Right ventricle myocardium inferior (tissue), 1 donor: ENCODE measurements at regions of chr1 and their contacts with region 1.

Region 1: GRCh38 chr1:234533975-234534876 is 55.2 kb upstream of the TARBP1 start:
- DNase-seq: peak; percentile 93
- ATAC-seq: peak; percentile 15

Region 2: GRCh38 chr1:234509452-234510328 is 24.5 kb before region 1 on chr1:
- intact Hi-C with region 1: no loop called
- DNase-seq: no peak
- ATAC-seq: no peak

Region 3: GRCh38 chr1:234599617-234600417 is 65.6 kb after region 1 on chr1:
- intact Hi-C with region 1: loop called (anchors 1 kb)
- DNase-seq: peak; percentile 92
- ATAC-seq: peak; percentile 94

Region 4: DNA sequence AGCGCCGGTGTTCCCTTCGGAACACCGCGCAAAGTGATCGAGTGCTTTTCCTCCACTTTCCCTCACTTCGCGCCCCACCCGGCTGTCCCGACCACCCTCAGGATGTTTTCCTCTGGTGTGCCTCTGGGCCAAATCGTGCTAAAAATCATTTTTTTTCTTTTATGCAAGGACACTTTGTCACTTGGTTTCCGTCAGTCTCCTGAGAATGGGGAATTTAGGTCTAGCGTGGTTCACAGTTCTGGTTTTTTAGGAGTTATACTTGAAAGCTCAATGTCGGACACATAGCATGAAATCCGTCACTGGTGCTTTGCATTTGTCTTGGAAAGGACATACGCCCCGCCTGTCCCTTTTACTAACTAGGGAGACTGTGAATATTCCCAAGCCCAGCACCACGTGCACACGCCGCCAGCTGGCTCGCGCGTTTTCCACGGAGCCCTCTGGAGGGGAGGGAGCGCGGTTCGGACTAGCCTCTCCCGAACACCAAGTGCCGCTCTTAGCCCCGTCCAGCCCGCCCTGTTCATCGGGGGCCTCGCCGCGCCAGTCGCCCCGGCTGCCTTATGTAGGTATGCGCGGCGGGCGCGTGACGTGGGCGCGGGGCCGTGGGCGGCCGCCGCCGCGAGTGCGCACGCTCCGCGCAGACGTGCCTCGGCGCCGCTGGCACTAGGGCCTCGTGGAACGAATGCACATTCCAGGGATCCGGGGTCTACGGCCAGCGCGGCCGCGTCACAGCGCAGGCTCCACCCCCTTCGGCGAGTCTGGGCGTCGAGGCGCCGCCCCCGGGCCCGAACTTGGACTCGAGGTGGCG is 76.3 kb after region 1 on chr1:
- intact Hi-C with region 1: loop called (anchors 1 kb)
- DNase-seq: peak; percentile 97
- ATAC-seq: peak; percentile 76

Region 5: GRCh38 chr1:234887016-234887900 is 353.0 kb after region 1 on chr1:
- intact Hi-C with region 1: loop called (anchors 2 kb)
- DNase-seq: peak; percentile 82
- ATAC-seq: peak; percentile 76

Region 6: GRCh38 chr1:234912548-234913277 is 378.5 kb after region 1 on chr1:
- intact Hi-C with region 1: loop called (anchors 5 kb)
- DNase-seq: no peak
- ATAC-seq: no peak

Region 7: GRCh38 chr1:234987415-234988154 is 453.4 kb after region 1 on chr1:
- intact Hi-C with region 1: loop called (anchors 5 kb)
- DNase-seq: no peak
- ATAC-seq: peak; percentile 92

Region 8: DNA sequence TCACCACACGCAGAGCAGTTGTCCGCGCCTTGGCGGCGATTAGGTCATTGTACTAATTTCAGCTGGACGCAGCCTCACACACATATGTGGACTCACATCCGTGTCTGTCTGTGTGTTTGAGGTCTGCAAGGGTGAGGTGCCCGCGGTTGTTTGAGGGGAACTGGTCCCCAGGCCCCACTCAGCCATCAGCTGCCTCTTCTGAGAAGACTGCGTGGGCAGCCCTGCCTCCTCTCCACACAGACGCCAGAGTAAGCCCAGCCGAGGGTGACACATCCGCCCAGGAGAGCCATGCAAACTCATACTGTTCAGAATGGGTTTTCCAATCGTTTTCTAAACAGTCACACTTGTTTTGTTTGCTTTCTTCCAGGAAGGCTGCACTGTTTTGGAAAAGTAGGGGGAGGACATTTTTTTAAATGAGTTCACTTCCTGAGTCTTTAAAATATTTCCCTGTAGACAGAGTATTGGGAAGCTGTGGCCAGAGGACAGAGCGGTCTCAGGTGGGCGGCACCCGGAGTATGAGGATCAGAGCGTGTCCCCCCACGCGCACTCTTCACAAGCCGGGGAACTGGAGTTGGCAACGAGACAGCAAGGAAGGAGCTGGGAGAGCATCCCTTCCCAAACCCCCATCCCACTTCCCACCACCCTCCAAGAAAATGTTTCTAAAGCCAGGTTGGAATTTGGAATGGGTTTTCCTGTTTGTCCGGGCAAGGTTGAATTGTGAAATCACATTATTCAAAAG is 541.1 kb after region 1 on chr1:
- intact Hi-C with region 1: loop called (anchors 5 kb)
- DNase-seq: peak; percentile 82
- ATAC-seq: peak; percentile 70